Right ventricle myocardium inferior (tissue), 1 donor: ENCODE measurements at regions of chr4 and their contacts with region 1.

Region 1: DNA sequence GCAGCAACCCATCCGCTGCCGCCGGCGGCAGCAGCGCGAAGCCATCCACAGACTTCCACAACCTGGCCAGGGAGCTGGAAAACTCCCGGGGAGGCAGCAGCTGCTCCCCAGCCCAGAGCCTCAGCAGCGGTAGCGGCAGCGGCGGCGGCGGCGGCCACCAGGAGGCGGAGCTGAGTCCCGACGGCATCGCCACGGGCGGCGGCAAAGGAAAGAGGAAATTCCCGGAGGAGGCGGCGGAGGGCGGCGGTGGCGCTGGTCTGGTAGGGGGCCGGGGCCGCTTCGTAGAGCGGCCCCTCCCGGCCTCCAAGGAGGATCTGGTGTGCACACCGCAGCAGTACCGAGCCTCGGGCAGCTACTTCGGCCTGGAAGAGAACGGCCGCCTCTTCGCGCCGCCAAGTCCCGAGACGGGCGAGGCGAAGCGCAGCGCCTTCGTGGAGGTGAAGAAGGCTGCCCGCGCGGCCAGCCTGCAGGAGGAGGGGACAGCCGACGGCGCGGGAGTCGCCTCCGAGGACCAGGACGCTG is 4.9 kb downstream of the PRDM8 start:
- DNase-seq: peak; percentile 96
- ATAC-seq: peak; percentile 84

Region 2: DNA sequence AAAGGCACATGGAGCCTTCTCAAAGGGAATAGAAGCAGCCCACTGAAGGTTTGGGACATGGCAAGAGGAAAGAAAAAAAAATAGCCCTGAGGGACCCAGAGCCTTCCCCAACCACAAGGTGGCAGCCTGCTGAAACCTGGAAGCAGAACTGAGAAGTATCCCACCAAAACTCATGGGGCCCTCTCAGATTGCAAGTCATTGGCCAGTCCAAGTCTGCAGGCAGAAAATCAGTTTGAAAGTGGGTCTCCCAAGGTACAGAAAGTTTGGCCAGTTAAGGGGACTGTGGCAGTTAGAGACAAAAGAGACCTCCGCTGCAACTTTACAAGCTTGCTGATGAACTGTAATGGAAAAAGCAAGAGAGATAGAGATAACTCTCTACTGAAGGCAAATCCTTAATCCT is 285.0 kb before region 1 on chr4:
- intact Hi-C with region 1: loop called (anchors 10 kb)
- DNase-seq: no peak
- ATAC-seq: no peak

Region 3: GRCh38 chr4:80268081-80268823 is 66.0 kb after region 1 on chr4:
- intact Hi-C with region 1: no loop called
- DNase-seq: no peak
- ATAC-seq: no peak

Region 4: GRCh38 chr4:80335554-80336358 is 133.5 kb after region 1 on chr4 and contains the start of gene CFAP299:
- intact Hi-C with region 1: loop called (anchors 5 kb)
- DNase-seq: peak; percentile 92
- ATAC-seq: peak; percentile 96
- total RNA-seq, gene CFAP299: 0.38 TPM

Region 5: DNA sequence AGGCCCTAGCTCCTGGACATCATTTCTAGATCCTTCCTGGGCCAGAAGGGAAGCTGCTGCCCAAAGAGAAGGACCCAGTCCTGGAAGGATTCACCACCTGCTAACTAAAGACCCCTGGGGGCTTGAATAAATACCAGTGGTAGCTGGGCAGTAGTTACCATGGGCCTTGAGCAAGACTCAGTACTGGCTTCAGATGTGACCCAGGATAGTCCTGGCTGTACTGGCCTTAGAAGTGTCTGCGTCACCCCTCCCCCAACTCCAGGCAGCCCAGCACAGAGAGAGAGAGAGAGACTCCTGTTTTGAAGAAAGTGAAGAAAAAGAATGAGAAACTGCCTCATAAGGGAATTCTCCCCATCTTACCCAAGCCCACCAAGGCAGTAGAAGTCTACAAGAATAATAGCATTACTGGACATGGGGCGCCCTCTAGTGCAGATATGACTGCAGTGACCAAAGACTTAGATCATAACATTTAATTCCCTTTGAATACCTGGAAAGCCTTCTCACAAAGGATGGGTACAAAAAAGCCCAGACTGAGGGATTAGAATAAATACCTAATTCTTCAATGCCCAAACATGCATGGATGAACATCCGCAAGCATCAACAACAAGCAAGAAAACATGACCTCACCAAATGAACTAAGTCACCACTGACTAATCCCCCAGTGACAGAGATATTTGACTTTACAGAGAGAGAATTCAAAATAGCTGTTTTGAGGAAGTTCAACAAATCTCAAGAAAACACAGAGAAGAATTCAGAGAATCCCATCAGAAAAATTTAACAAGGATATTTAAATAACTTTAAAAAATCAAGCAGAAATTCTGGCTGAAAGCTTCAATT is 1999.8 kb after region 1 on chr4:
- intact Hi-C with region 1: no loop called
- DNase-seq: no peak
- ATAC-seq: no peak